ENCODE measurements at regions of chr19 and their contacts with region 1.

Region 1: GRCh38 chr19:3176603-3177501 is 1.7 kb upstream of the S1PR4 start:
- DNase-seq: no peak
- ATAC-seq: no peak
- H3K4me3 Mint-ChIP-seq: peak overlapping the region; percentile 35
- H3K27ac Mint-ChIP-seq: peak overlapping the region; percentile 87
- H3K4me1 Mint-ChIP-seq: peaks cover 55% of the 10 kb centered on the region
- H3K27me3 Mint-ChIP-seq: no peaks in the 10 kb centered on the region
- CTCF ChIP-seq: no peak

Region 2: DNA sequence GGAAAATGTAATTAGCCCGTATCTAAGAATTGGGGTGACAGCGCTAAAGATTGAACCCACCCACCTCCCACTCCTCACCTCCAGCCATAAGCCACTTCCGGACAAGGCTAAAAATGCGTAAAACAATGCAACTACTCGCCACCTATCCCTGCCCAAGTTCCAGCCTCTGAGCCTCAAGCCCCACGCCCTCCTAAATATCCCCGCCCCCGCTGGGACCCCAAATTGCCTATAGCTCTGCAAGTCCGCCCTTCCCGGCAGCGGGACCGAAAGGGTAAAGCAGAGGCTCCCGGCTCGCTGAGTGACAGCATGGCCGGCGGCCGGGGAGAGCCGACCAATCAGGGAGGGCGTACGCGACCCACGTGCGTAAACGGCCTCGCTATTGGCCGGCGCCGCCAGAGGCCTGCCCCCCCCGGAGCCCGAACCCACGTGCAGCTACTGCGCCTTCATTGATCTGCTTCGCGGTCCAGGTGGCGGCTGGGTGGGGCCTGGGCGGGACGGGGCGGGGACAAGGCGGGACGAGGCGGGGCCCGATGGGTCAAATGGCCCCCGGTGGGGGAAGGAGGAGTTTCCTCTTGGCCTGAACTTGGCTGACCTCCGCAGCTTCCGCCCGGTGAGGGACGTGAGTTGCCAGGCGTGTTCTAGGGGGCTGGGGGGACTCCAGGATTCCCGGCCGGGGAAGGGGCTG is 199.7 kb before region 1 on chr19 and contains the start of gene TLE6:
- CTCF ChIA-PET with region 1: no interaction called
- POLR2A ChIA-PET with region 1: no interaction called
- intact Hi-C with region 1: loop called (anchors 5 kb)
- DNase-seq: peak; percentile 83
- ATAC-seq: peak; percentile 98
- H3K4me3 Mint-ChIP-seq: peak within 1 kb of the TSS; percentile 91
- H3K27ac Mint-ChIP-seq: peak within 1 kb of the TSS; percentile 81
- H3K4me1 Mint-ChIP-seq: peaks cover 22% of the 10 kb centered on the region
- H3K27me3 Mint-ChIP-seq: peaks cover 8% of the 10 kb centered on the region
- CTCF ChIP-seq: no peak
- total RNA-seq, gene TLE6: 0.42 and 0.93 TPM in 2 replicates

Region 3: GRCh38 chr19:3035542-3036118 is 141.2 kb before region 1 on chr19:
- CTCF ChIA-PET with region 1: no interaction called
- POLR2A ChIA-PET with region 1: interaction called, 10 read pairs
- intact Hi-C with region 1: no loop called
- DNase-seq: peak; percentile 82
- ATAC-seq: peak; percentile 93
- H3K4me3 Mint-ChIP-seq: peak overlapping the region; percentile 90
- H3K27ac Mint-ChIP-seq: peak overlapping the region; percentile 88
- H3K4me1 Mint-ChIP-seq: peaks cover 17% of the 10 kb centered on the region
- H3K27me3 Mint-ChIP-seq: peaks cover 11% of the 10 kb centered on the region
- CTCF ChIP-seq: no peak

Region 4: GRCh38 chr19:3062168-3063102 is 114.4 kb before region 1 on chr19 and contains the start of gene TLE5:
- CTCF ChIA-PET with region 1: no interaction called
- POLR2A ChIA-PET with region 1: no interaction called
- intact Hi-C with region 1: loop called (anchors 5 kb)
- DNase-seq: peak; percentile 76
- ATAC-seq: peak; percentile 43
- H3K4me3 Mint-ChIP-seq: peak within 1 kb of the TSS; percentile 84
- H3K27ac Mint-ChIP-seq: peak within 1 kb of the TSS; percentile 89
- H3K4me1 Mint-ChIP-seq: peaks cover 65% of the 10 kb centered on the region
- H3K27me3 Mint-ChIP-seq: no peaks in the 10 kb centered on the region
- CTCF ChIP-seq: no peak
- total RNA-seq, gene TLE5: 323 TPM in 2 replicates

Region 5: DNA sequence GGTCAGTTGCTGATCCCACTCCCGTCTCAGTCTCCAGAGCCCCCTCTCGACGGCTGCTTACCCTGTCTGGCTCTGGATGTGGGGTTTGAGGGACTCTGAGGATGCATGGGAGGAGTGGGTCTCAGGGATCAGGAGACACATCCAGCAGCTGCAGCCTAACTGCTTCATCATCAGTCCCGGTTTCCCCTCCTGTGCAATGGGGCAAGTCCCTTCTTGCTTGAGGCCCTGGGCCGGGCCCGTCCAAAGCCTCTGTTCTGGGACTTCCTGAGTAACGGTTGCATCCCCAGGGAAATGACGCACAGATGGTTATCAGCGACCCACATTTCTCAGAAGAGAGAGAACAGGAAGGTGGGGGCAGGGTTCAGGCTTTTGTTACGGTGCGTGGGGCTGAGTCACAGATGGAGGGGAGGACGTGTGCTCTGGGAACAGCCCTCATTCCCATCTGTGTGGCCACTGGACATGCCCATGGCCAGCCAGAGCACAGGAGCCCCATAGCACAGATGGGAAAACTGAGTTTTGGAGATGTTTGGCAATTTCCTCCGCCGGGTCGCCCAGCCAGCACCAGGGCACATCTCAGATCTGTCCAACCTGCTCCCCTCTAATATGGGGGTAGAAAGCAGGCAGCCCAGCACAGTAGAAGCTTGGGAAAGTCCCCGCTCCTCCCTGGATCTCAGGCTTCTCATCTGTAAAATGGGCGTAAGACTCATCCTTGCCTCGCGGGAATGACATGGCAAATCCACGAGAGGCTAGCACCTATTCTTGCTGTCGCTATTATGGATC is 21.7 kb before region 1 on chr19:
- CTCF ChIA-PET with region 1: no interaction called
- POLR2A ChIA-PET with region 1: interaction called, 4 read pairs
- intact Hi-C with region 1: loop called (anchors 2 kb)
- DNase-seq: peak; percentile 62
- ATAC-seq: peak; percentile 97
- H3K4me3 Mint-ChIP-seq: peak overlapping the region; percentile 72
- H3K27ac Mint-ChIP-seq: peak overlapping the region; percentile 84
- H3K4me1 Mint-ChIP-seq: no peaks in the 10 kb centered on the region
- H3K27me3 Mint-ChIP-seq: no peaks in the 10 kb centered on the region
- CTCF ChIP-seq: no peak

Region 6: DNA sequence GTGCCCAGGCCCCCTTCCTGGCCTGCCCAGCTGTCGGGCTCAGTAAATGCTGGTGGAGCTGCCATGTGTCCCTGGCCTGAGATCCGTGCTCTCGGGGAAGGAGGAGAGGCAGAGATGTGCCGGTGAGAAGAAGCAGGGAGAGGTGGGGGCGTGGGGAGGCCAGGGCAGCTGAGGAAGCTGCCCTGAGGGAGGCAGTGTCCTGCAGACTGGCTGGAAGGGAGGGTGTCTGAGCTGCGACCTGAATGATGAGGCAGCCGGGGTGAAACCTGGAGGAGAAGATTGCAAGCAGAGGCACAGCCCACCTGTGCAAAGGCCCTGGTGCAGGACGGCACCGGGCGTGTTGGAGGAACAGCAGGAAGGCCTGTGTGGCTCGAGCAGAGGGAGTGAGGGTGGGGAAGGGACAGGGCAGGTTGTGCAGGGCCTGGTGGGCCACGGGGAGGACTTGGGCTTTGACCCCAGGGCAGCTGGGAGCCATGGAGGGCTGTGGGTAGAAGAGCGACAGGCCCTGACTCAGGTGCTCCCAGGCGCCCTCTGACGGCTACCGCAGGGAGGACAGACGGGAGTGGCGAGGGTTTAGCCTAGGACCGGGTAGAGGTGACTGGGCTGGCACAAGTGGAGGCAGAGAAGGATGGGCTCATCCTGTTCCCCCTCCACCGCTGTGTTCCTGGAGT is 33.6 kb after region 1 on chr19:
- CTCF ChIA-PET with region 1: no interaction called
- POLR2A ChIA-PET with region 1: interaction called, 22 read pairs
- intact Hi-C with region 1: no loop called
- DNase-seq: peak; percentile 62
- ATAC-seq: peak; percentile 94
- H3K4me3 Mint-ChIP-seq: no peak overlapping the region
- H3K27ac Mint-ChIP-seq: no peak overlapping the region
- H3K4me1 Mint-ChIP-seq: peaks cover 14% of the 10 kb centered on the region
- H3K27me3 Mint-ChIP-seq: no peaks in the 10 kb centered on the region
- CTCF ChIP-seq: no peak

Region 7: GRCh38 chr19:3289971-3290569 is 113.2 kb after region 1 on chr19:
- CTCF ChIA-PET with region 1: no interaction called
- POLR2A ChIA-PET with region 1: no interaction called
- intact Hi-C with region 1: no loop called
- DNase-seq: no peak
- ATAC-seq: no peak
- H3K4me3 Mint-ChIP-seq: no peak overlapping the region
- H3K27ac Mint-ChIP-seq: no peak overlapping the region
- H3K4me1 Mint-ChIP-seq: peaks cover 4% of the 10 kb centered on the region
- H3K27me3 Mint-ChIP-seq: peaks cover 29% of the 10 kb centered on the region
- CTCF ChIP-seq: no peak

Measured in activated B cell treated with CpG ODN at 0.5 μM for 24 hours (primary cell).